ENCODE measurements at regions of chr15 and their contacts with region 1.

Region 1: GRCh38 chr15:40160689-40161688 is at the start of gene BUB1B:
- DNase-seq: peak; percentile 96
- H3K4me3 Mint-ChIP-seq: no peak within 1 kb of the TSS
- H3K27ac Mint-ChIP-seq: no peak within 1 kb of the TSS
- H3K4me1 Mint-ChIP-seq: peaks cover 6% of the 10 kb centered on the region
- H3K27me3 Mint-ChIP-seq: no peaks in the 10 kb centered on the region
- total RNA-seq, gene BUB1B: 88.8 to 96.1 TPM

Region 2: DNA sequence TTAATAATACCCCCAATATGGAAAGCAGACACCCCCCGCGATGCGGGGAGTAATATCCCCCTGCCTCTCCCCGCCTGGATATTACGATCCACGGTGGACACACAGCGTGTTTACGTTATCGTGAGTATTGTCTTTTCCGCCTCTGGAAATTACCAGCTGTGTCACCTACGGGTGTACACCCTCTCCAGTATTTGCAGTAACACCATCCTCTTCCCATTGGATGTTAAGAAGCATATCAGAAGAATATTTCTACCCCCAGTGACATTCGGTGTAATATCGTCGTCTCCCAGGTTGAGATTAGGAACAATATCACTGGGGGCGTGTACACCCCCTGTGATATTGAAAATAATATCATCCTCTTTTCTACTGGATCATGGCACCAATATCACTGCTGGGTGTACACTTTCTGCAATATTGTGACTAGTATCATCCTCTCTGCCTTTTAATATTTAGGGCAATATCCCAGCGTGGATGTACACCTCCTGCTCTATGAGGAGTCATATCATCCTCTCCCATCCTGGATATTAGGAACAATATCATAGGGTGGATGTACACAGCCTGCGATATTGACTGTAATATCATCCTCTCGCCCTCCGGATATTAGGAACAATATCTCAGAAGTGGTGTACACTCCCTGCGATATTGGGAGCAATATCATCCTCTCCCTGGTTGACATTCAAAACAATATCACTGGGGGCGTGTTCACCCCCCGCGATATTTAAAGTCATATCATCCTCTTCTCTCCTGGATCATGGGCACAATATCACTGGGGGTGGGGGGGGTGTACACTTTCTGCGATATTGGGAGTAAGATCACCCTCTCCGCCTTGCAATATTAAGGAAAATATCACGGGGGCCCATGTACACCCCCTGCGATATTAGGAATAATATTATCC is 32.0 kb before region 1 on chr15:
- CTCF ChIA-PET with region 1: no interaction called
- POLR2A ChIA-PET with region 1: no interaction called
- intact Hi-C with region 1: loop called (anchors 5 kb)
- DNase-seq: peak; percentile 48
- H3K4me3 Mint-ChIP-seq: no peak overlapping the region
- H3K27ac Mint-ChIP-seq: peak overlapping the region; percentile 46
- H3K4me1 Mint-ChIP-seq: no peaks in the 10 kb centered on the region
- H3K27me3 Mint-ChIP-seq: peaks cover 13% of the 10 kb centered on the region

Region 3: DNA sequence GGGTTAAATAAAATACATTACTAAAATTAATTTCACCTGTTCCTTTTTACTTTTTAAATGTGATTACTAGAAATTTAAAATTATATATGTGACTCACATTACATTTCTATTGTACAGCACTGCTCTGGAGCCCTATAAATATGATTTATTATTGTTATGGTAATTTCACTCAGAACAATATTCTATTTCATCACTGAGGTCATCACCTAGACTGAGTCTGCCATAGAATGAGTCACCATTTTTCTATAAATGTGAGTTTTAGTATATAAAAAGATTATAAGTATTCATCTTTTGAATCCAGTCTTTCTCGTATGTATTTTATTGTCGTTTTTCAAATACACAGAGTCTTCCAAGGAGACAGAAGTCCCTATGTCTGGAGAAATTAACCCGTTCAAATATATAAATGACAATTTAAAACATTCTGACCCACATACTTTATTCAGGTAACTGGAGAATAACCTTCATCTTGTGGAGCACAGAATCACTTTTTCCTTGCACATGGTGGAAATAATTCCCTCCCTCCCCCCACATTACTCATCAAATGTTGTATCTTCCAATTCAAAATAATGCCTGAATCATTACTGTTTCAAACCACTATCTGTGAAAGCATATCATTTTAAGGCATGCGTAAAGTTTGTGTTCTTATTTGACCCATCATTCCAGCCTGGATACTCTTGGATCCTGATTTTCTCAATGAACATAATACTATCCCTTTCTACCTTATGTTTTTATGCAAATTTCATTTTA is 339.8 kb after region 1 on chr15:
- CTCF ChIA-PET with region 1: no interaction called
- POLR2A ChIA-PET with region 1: no interaction called
- intact Hi-C with region 1: no loop called
- DNase-seq: no peak
- H3K4me3 Mint-ChIP-seq: no peak overlapping the region
- H3K27ac Mint-ChIP-seq: no peak overlapping the region
- H3K4me1 Mint-ChIP-seq: peaks cover 2% of the 10 kb centered on the region
- H3K27me3 Mint-ChIP-seq: peaks cover 14% of the 10 kb centered on the region